MCF 10A (cell line): ENCODE measurements at regions of chr3 and their contacts with region 1.

Region 1: DNA sequence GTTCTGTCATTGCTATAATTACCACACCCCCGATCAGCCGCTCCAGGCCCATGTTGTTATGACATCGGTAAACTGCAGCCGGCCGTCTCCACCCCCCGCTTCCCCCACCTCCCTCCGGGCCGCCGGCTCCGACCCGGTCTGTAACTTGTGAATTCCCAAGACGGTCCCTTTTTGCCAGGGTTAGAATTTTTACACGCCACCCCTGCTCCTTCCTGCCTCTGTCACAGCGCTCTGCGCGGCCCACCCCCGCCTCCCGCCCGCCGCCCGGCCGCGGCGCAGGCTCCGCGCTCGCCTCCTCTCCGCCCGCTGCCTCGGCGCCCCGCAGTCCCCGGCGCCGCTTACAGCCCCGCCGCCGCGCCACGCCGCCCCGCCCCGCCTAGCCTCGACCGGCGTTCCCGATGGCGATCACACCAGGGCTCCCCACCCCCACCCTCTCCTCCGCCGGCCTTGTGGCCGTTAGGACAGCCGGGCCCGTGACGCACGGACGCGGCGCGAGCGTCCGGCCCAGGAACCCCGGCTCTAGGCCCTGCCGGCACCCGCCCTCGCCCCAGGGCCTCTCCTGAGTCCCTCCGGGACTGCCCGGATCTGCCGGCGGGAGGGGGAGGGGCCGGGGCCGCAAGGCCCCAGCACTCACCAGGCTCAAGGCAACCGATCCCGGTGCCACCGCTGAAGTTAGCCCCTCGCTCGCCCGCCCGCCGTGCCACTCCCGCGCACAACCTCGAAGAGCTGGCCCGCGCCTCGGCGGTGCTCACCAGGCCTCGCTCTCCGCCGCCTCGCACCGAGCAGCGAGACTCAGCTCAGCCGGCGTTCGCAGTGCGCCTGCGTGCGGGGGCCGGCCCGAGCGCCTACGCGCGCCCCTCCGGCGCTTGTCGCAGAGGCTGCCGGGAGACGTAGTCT is at the start of gene KPNA1:
- DNase-seq: peak; percentile 88
- H3K4me3 Mint-ChIP-seq: peak within 1 kb of the TSS; percentile 81
- H3K27ac Mint-ChIP-seq: peak within 1 kb of the TSS; percentile 84
- H3K4me1 Mint-ChIP-seq: peaks cover 34% of the 10 kb centered on the region
- H3K27me3 Mint-ChIP-seq: no peaks in the 10 kb centered on the region
- CTCF ChIP-seq: no peak
- total RNA-seq, gene KPNA1: 101 and 104 TPM in 2 replicates

Region 2: GRCh38 chr3:122458992-122459391 is 55.4 kb before region 1 on chr3:
- CTCF ChIA-PET with region 1: interaction called, 8 read pairs
- POLR2A ChIA-PET with region 1: interaction called, 4 read pairs
- intact Hi-C with region 1: loop called (anchors 2 kb)
- DNase-seq: peak; percentile 72
- H3K4me3 Mint-ChIP-seq: no peak overlapping the region
- H3K27ac Mint-ChIP-seq: no peak overlapping the region
- H3K4me1 Mint-ChIP-seq: peaks cover 7% of the 10 kb centered on the region
- H3K27me3 Mint-ChIP-seq: no peaks in the 10 kb centered on the region
- CTCF ChIP-seq: peak; percentile 32

Region 3: DNA sequence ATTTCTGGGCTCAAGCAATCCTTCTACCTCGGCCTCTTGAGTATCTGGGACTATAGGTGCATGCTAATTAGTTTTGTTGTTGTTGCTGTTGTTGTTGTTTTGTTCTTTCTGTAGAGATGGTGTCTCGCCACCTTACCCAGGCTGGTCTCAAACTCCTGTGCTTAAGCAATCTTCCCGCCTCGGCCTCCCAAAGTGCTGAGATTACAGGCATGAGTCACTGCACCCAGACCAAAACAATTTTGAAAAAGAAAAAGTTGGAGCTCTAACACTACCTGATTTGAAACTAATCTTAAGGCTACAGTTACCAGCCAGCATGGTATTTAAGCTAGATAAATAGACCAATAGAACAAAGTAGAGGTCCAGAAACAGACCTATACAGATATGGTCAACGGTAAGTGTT is 29.4 kb before region 1 on chr3:
- CTCF ChIA-PET with region 1: interaction called, 3 read pairs
- POLR2A ChIA-PET with region 1: interaction called, 144 read pairs
- intact Hi-C with region 1: no loop called
- DNase-seq: peak; percentile 74
- H3K4me3 Mint-ChIP-seq: peak overlapping the region; percentile 47
- H3K27ac Mint-ChIP-seq: peak overlapping the region; percentile 86
- H3K4me1 Mint-ChIP-seq: peaks cover 31% of the 10 kb centered on the region
- H3K27me3 Mint-ChIP-seq: no peaks in the 10 kb centered on the region
- CTCF ChIP-seq: no peak

Region 4: GRCh38 chr3:122497425-122497824 is 16.9 kb before region 1 on chr3:
- CTCF ChIA-PET with region 1: interaction called, 5 read pairs
- POLR2A ChIA-PET with region 1: interaction called, 144 read pairs
- intact Hi-C with region 1: no loop called
- DNase-seq: peak; percentile 94
- H3K4me3 Mint-ChIP-seq: no peak overlapping the region
- H3K27ac Mint-ChIP-seq: peak overlapping the region; percentile 97
- H3K4me1 Mint-ChIP-seq: peaks cover 52% of the 10 kb centered on the region
- H3K27me3 Mint-ChIP-seq: no peaks in the 10 kb centered on the region
- CTCF ChIP-seq: no peak

Region 5: GRCh38 chr3:122533931-122534334 is 19.6 kb after region 1 on chr3:
- CTCF ChIA-PET with region 1: no interaction called
- POLR2A ChIA-PET with region 1: interaction called, 12 read pairs
- intact Hi-C with region 1: no loop called
- DNase-seq: peak; percentile 98
- H3K4me3 Mint-ChIP-seq: no peak overlapping the region
- H3K27ac Mint-ChIP-seq: peak overlapping the region; percentile 21
- H3K4me1 Mint-ChIP-seq: peaks cover 28% of the 10 kb centered on the region
- H3K27me3 Mint-ChIP-seq: no peaks in the 10 kb centered on the region
- CTCF ChIP-seq: no peak